ENCODE measurements at regions of chr12 and their contacts with region 1.

Region 1: DNA sequence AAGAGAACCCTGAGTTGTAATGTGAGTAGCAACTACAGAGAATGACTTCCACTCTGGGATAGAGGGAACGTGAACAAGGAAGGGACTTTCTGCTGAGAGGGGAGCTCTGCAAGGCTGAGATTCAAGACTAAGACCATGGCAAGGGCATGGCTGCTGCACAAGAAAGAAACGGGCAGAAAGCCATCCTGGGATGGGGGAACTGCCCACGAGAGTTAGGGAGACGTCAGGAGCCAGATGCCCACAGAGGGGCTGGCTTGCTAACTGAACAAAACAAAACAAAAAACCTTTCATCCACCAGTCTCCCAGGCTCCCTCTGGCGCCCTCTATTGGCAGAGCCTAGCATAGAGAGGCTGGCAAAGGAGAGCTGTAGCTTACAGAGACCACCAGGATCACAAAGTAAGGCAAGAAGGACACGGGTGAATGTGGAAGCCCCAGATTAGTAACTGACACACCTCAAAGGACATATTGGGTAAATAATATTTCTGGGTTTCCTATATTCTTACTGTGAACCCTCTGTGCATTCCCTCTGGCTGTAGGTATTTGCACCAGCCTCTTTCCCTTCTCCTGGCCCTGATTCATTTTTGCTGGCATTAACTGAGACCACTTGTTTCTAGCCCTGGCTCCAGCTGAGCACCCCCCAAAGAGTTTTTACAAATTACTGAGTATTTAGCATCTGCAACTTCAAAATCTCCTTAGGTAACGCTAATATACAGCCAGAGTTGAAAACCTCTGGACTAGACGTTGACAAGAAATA is 338.3 kb downstream of the EMP1 start:
- DNase-seq: peak; percentile 24
- ATAC-seq: no peak
- H3K4me3 Mint-ChIP-seq: no peak overlapping the region
- H3K27ac Mint-ChIP-seq: no peak overlapping the region
- H3K4me1 Mint-ChIP-seq: peaks cover 48% of the 10 kb centered on the region
- H3K27me3 Mint-ChIP-seq: no peaks in the 10 kb centered on the region
- CTCF ChIP-seq: no peak

Region 2: DNA sequence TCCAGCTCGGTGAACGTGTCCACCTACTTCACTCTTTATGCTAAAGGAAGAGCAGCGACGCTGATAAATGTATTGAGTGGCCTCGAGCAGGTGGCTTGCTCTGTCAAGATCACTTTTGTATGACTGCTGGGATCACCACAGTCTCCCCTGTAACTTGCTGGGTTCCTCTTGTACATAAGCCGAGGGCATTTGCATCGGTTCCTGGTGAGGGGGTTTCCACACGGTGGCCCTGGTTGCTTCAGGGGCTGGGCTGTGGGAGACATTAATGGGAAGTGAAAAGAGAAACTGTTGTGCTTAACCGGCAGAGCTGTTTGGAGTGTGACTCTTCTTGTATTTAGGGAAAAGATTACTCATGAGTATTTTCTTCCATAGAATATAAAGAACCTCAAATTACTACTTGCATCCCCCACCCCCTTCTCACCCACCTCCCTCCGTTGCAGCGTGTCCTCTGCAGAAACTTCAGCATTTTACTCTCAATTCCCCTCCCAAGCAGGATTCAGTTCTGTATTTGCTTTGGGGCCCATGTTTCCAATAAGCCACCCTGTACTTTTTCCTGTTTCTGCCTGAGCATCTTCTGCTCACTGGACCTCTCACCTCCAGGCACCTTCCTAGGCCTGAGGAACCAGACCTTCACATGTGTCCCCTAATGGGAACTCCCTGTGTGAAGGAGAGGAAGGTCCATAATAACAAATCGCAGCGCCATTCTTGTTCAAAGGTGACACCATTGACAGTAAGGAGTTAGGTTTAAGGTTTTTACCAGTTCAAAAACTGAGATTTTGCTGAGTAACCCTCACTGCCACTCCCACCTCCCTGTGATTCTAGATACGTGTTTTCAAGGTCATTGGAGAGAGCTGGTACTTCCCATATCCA is 1698.3 kb before region 1 on chr12:
- CTCF ChIA-PET with region 1: no interaction called
- POLR2A ChIA-PET with region 1: no interaction called
- intact Hi-C with region 1: loop called (anchors 10 kb)
- DNase-seq: peak; percentile 73
- ATAC-seq: peak; percentile 94
- H3K4me3 Mint-ChIP-seq: peak overlapping the region; percentile 73
- H3K27ac Mint-ChIP-seq: peak overlapping the region; percentile 95
- H3K4me1 Mint-ChIP-seq: peaks cover 81% of the 10 kb centered on the region
- H3K27me3 Mint-ChIP-seq: no peaks in the 10 kb centered on the region
- CTCF ChIP-seq: no peak

Region 3: DNA sequence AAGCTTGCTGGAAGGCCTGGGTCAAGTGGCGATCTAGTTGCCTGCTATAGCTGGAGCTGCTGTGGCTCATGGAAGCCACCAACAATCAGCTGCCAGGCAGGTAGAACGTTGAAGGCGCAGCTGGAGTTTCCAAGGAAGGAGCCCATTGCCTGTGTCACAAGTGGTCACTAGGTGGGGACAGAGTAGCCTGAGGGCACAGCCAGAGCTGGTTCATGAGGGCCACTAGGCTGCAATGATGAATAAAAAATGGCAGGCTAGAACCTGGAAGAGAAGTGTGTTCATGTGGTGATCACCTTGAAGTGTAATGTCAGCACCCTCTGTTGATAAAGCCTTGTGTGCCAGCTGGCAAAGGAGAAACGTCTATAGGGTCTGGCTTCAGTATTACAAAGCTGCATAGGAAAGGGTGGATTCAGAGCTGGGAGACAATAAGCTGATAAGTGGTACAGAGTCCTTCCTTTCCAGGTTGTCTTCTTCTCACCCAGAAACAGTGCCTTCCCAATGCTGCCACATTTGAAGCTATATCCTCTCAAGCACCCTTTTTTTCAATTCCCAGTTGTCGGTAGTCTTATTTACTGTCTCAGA is 172.5 kb before region 1 on chr12:
- CTCF ChIA-PET with region 1: interaction called, 9 read pairs
- POLR2A ChIA-PET with region 1: no interaction called
- intact Hi-C with region 1: loop called (anchors 2 kb)
- DNase-seq: peak; percentile 33
- ATAC-seq: peak; percentile 84
- H3K4me3 Mint-ChIP-seq: no peak overlapping the region
- H3K27ac Mint-ChIP-seq: no peak overlapping the region
- H3K4me1 Mint-ChIP-seq: no peaks in the 10 kb centered on the region
- H3K27me3 Mint-ChIP-seq: peaks cover 11% of the 10 kb centered on the region
- CTCF ChIP-seq: peak; percentile 63

Region 4: GRCh38 chr12:13496111-13496510 is 38.7 kb before region 1 on chr12:
- CTCF ChIA-PET with region 1: no interaction called
- POLR2A ChIA-PET with region 1: no interaction called
- intact Hi-C with region 1: no loop called
- DNase-seq: no peak
- ATAC-seq: no peak
- H3K4me3 Mint-ChIP-seq: no peak overlapping the region
- H3K27ac Mint-ChIP-seq: no peak overlapping the region
- H3K4me1 Mint-ChIP-seq: peaks cover 15% of the 10 kb centered on the region
- H3K27me3 Mint-ChIP-seq: no peaks in the 10 kb centered on the region
- CTCF ChIP-seq: no peak

Region 5: DNA sequence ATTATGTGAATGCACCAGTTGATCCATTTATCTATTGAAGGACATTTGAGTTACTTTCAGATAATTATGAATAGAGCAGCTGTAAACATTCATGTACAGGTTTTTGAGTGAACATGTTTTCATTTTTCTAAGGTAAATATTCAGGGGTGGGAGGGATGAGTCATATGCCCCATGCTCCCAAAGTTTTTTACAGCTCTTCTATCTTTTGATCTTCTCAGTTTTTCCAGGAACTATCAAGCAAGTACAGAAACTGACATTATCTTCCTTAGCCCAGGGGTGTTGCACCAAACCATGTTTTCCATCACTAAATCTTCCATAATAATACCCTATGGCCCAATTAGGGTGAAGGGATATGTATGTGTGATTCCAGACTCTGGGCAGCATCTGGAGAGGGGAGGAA is 46.2 kb after region 1 on chr12:
- CTCF ChIA-PET with region 1: no interaction called
- POLR2A ChIA-PET with region 1: no interaction called
- intact Hi-C with region 1: no loop called
- DNase-seq: no peak
- ATAC-seq: no peak
- H3K4me3 Mint-ChIP-seq: no peak overlapping the region
- H3K27ac Mint-ChIP-seq: no peak overlapping the region
- H3K4me1 Mint-ChIP-seq: no peaks in the 10 kb centered on the region
- H3K27me3 Mint-ChIP-seq: no peaks in the 10 kb centered on the region
- CTCF ChIP-seq: no peak

Region 6: GRCh38 chr12:13592063-13592942 is 57.5 kb after region 1 on chr12:
- CTCF ChIA-PET with region 1: no interaction called
- POLR2A ChIA-PET with region 1: no interaction called
- intact Hi-C with region 1: loop called (anchors 5 kb)
- DNase-seq: no peak
- ATAC-seq: no peak
- H3K4me3 Mint-ChIP-seq: no peak overlapping the region
- H3K27ac Mint-ChIP-seq: no peak overlapping the region
- H3K4me1 Mint-ChIP-seq: peaks cover 14% of the 10 kb centered on the region
- H3K27me3 Mint-ChIP-seq: no peaks in the 10 kb centered on the region
- CTCF ChIP-seq: no peak

Region 7: GRCh38 chr12:14111230-14111865 is 576.5 kb after region 1 on chr12:
- CTCF ChIA-PET with region 1: no interaction called
- POLR2A ChIA-PET with region 1: no interaction called
- intact Hi-C with region 1: loop called (anchors 5 kb)
- DNase-seq: peak; percentile 21
- ATAC-seq: peak; percentile 96
- H3K4me3 Mint-ChIP-seq: no peak overlapping the region
- H3K27ac Mint-ChIP-seq: peak overlapping the region; percentile 18
- H3K4me1 Mint-ChIP-seq: peaks cover 13% of the 10 kb centered on the region
- H3K27me3 Mint-ChIP-seq: no peaks in the 10 kb centered on the region
- CTCF ChIP-seq: no peak

Region 8: DNA sequence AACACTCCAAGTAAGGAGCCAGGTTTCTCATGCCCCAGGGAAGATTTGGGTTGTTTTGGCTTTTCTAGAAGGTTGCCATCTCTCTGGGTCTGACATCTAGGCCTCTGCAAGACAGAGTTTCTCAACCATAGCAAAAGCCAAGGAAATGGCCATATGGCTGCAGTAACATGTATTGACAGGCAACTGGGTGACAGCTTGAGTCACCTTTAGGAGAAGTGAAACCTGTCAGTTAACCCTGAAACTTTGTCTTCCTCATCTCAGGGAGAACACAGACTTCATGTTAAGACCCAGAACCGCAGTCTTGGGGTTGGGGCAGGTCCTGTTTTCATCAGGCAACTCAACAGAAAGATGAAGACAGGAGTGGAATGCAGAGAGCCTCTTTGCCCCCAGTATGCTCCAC is 1078.9 kb after region 1 on chr12:
- CTCF ChIA-PET with region 1: no interaction called
- POLR2A ChIA-PET with region 1: no interaction called
- intact Hi-C with region 1: loop called (anchors 5 kb)
- DNase-seq: peak; percentile 34
- ATAC-seq: peak; percentile 86
- H3K4me3 Mint-ChIP-seq: peak overlapping the region; percentile 60
- H3K27ac Mint-ChIP-seq: peak overlapping the region; percentile 93
- H3K4me1 Mint-ChIP-seq: peaks cover 38% of the 10 kb centered on the region
- H3K27me3 Mint-ChIP-seq: no peaks in the 10 kb centered on the region
- CTCF ChIP-seq: no peak